ENCODE measurements at regions of chr7 and their contacts with region 1.

Region 1: DNA sequence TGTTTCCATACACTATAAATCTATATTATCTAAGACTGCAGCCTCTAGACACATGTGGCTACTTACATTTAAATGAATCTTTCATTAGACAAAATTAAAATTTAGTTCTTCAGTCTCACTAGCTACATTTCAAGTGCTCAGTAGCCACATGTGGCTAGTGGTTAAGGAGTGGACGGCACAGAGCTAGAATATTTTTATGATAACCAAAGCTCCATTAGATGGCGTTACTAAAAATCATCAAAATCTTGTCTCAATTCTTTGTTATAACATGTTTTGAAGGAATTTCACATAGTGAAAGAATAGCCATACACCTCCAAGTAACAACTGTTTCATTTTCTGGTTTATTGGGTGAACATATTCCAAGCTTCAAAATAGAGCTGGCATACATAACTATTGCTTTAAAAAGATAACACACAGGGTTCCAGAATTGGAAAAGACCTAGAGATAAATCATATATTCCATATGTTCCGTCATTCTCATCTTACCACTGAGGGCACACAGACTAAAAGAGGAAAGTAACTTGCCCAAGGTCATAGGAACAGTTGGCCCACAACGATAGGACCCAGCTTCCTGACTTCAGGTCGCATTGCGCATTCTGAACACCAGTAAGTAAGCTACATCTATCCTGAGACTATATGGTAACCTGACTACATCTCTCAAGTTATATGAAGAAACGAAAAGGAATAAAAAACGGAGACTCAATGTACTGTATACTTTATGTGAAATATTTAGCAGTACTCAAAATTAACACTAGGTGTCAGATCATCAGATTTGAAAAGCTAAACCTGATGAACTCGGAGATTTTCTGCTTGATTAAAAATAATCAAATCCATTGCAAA is 66.6 kb downstream of the CAV1 start:
- DNase-seq: no peak
- H3K4me3 ChIP-seq: peak overlapping the region in 1 of 2 donors; percentile 2
- H3K27ac ChIP-seq: no peak overlapping the region
- H3K4me1 ChIP-seq: peaks cover 0 to 22% (median 7%) of the 10 kb centered on the region in 4 donors
- H3K27me3 ChIP-seq: no peaks in the 10 kb centered on the region
- CTCF ChIP-seq: peak; percentile 65 to 67

Region 2: DNA sequence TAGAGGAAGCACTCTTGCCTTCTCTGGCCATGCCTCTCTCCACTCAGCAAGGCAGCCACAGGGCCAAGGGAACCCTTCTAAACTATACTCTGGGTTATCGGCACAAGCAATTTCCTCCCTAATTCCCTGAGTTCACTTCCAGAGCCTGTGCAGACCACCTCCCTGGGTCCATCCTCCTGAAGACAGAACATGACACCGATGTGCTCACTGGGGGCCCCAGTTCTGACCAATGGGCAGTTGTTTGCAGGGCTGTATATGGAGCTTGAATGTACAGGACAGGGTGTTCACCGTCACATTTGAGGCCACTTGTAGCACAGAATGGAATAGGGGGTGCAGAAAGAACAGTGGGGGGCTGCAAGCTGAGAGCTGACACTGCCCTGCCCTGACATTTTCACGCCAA is 638.6 kb before region 1 on chr7:
- intact Hi-C with region 1: loop called (anchors 10 kb)
- DNase-seq: no peak
- H3K4me3 ChIP-seq: no peak overlapping the region
- H3K27ac ChIP-seq: no peak overlapping the region
- H3K4me1 ChIP-seq: no peaks in the 10 kb centered on the region
- H3K27me3 ChIP-seq: no peaks in the 10 kb centered on the region
- CTCF ChIP-seq: no peak

Region 3: DNA sequence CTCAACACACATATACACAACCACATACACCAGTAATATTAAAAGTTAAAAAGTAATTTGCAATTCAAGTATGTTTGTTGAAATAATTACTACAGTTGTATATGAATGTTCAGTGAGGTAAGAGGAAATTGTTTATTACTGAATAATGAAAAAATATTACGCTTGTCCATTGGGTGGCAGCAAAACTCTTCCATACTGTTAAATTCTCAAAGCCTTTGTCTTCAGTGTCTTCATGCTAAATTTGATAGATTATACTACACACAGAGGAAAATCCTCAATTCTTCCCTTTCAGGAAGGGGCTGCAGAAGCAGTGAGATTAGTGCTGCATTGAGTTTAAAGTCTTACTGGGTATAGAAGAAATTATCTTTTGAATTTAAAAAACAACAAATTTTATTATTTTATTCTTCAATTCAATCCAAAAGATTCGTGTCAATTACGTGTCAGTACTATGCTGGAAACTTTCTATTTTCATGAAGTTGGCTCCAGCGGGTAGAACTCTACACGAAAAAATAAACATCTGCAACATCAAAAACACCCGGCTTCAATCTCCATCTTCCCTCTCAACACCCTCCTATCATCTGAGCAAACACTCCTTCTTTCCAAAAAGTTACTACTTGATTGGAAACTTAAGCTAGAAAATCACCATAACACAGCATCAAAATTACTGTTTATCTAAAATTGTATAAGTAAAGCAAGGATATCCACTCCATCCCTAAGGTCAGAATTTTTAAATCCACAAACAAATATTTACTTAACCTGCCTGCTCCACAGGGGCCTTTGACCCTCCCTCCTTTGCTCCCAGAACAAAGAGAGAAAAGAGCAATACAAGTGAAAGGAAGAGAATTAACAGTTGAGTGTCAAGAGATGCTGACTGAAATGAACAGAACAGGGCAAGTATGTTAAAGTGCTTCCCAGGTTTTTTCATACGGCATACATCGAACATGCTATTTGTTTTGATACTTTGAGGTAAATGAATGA is 418.1 kb before region 1 on chr7:
- intact Hi-C with region 1: loop called (anchors 5 kb)
- DNase-seq: no peak
- H3K4me3 ChIP-seq: no peak overlapping the region
- H3K27ac ChIP-seq: no peak overlapping the region
- H3K4me1 ChIP-seq: peaks cover 0 to 26% (median 0%) of the 10 kb centered on the region in 4 donors
- H3K27me3 ChIP-seq: no peaks in the 10 kb centered on the region
- CTCF ChIP-seq: peak; percentile 53 to 84

Region 4: GRCh38 chr7:116501425-116502167 is 89.8 kb before region 1 on chr7:
- intact Hi-C with region 1: no loop called
- DNase-seq: no peak
- H3K4me3 ChIP-seq: peak overlapping the region; percentile 84 to 96
- H3K27ac ChIP-seq: peak overlapping the region; percentile 98
- H3K4me1 ChIP-seq: peaks cover 0 to 63% (median 18%) of the 10 kb centered on the region in 4 donors
- H3K27me3 ChIP-seq: no peaks in the 10 kb centered on the region
- CTCF ChIP-seq: no peak

Region 5: DNA sequence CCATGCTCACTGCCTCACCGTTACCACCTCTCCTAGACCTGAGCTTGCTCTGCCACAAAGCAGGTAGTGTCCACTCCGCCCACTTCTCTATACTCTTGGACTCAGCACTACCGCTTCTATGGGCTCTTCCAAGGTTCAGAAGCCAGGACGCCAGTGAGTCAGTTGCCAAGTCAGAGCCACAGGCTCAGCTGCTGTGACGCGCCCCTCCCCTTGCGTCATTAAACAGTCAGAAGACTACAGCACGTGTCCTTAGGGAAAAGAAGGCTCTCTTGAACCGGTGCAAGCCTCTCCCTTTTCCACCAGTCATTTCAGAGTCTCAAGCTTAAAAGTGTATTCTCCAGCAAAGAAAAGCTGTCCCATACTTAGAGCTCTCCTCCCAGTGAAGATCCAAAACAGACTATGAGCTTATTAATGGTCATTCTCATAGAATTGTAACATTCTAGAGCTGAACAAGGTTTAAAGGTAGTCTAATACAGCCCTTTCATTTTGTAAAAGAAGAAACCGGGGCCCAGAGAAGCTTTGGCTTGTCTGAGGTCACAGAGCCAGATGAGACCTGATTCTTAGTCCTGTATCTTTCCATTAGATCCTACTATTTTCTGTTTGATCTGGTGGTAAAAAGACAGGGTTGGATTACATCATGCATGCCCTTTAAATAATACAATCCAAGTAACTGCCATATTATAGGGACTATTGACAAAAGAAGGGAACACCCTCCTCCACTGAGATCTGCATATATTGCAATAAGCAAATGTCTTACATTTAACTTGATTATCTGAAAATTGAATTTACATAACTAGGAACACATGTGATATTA is 39.7 kb after region 1 on chr7:
- intact Hi-C with region 1: no loop called
- DNase-seq: peak; percentile 45 to 83
- H3K4me3 ChIP-seq: no peak overlapping the region
- H3K27ac ChIP-seq: no peak overlapping the region
- H3K4me1 ChIP-seq: peaks cover 0 to 9% (median 1%) of the 10 kb centered on the region in 4 donors
- H3K27me3 ChIP-seq: no peaks in the 10 kb centered on the region
- CTCF ChIP-seq: no peak

Measured in tibial artery (tissue), 4 donors.